Activated CD4-positive, alpha-beta memory T cell treated with anti-CD3 and anti-CD28 coated beads for 36 hours (primary cell): ENCODE measurements at regions of chr10 and their contacts with region 1.

Region 1: DNA sequence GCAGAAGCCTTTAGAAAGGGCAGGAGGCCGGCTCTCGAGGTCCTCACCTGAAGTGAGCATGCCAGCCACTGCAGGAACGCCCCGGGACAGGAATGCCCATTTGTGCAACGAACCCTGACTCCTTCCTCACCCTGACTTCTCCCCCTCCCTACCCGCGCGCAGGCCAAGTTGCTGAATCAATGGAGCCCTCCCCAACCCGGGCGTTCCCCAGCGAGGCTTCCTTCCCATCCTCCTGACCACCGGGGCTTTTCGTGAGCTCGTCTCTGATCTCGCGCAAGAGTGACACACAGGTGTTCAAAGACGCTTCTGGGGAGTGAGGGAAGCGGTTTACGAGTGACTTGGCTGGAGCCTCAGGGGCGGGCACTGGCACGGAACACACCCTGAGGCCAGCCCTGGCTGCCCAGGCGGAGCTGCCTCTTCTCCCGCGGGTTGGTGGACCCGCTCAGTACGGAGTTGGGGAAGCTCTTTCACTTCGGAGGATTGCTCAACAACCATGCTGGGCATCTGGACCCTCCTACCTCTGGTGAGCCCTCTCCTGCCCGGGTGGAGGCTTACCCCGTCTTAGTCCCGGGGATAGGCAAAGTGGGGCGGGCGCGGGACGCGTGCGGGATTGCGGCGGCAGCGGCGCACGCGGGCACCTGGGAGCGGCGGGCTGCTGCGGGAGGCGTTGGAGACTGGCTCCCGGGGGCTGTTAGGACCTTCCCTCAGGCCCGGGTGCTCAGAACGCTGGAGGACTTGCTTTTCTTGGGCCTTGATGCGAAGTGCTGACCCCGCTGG is at the start of gene FAS:
- DNase-seq: peak; percentile 94
- H3K4me3 Mint-ChIP-seq: peak within 1 kb of the TSS; percentile 86
- H3K27ac Mint-ChIP-seq: peak within 1 kb of the TSS; percentile 96
- H3K4me1 Mint-ChIP-seq: peaks cover 65% of the 10 kb centered on the region
- H3K27me3 Mint-ChIP-seq: no peaks in the 10 kb centered on the region
- total RNA-seq, gene FAS: 62.2 to 63.5 TPM

Region 2: DNA sequence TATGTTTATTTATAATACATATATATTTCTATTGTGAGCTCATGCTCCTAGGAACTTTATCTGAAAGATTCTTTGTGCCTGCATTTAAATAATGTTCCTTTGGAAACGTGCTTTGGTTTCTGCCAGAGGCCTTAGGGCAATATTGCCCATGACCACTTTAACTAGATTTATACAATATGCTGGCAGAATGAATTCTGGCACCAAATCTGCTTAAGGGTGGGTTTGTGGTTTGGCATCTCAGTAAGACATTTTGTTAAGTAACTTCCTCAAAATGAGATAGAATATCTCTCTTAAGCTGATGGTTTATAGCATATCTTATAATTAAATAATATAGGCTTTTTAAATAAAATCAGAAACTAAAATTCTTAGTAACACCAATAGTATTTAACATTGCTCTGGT is 660.4 kb before region 1 on chr10:
- CTCF ChIA-PET with region 1: no interaction called
- POLR2A ChIA-PET with region 1: no interaction called
- intact Hi-C with region 1: no loop called
- DNase-seq: no peak
- H3K4me3 Mint-ChIP-seq: no peak overlapping the region
- H3K27ac Mint-ChIP-seq: no peak overlapping the region
- H3K4me1 Mint-ChIP-seq: peaks cover 6% of the 10 kb centered on the region
- H3K27me3 Mint-ChIP-seq: no peaks in the 10 kb centered on the region

Region 3: DNA sequence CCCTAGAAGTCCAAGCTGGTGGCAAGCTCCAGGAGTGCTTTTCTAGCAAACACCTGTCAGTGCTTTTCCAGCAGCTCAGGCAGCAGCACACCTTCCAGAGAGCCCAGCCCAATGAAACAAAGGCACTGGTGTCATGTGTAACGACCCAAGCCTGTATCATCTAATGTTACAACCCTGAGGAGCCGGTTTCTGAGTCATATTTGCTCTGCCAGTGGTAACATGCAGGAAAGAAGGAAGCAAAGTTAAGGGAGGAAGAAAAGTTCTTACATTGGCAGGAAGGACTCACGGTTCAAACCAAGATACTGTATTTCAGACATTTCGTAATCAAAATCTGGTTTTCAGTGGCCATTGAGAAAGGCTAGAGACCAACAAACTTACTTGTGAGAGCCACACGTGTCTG is 138.9 kb before region 1 on chr10 and contains the start of gene ANKRD22:
- CTCF ChIA-PET with region 1: no interaction called
- POLR2A ChIA-PET with region 1: no interaction called
- intact Hi-C with region 1: loop called (anchors 2 kb)
- DNase-seq: no peak
- H3K4me3 Mint-ChIP-seq: no peak within 1 kb of the TSS
- H3K27ac Mint-ChIP-seq: no peak within 1 kb of the TSS
- H3K4me1 Mint-ChIP-seq: peaks cover 20% of the 10 kb centered on the region
- H3K27me3 Mint-ChIP-seq: peaks cover 6% of the 10 kb centered on the region
- total RNA-seq, gene ANKRD22: 0.12 to 0.24 TPM

Region 4: GRCh38 chr10:88960802-88961201 is 29.8 kb before region 1 on chr10:
- CTCF ChIA-PET with region 1: interaction called, 4 read pairs
- POLR2A ChIA-PET with region 1: interaction called, 20 read pairs
- intact Hi-C with region 1: loop called (anchors 1 kb)
- DNase-seq: peak; percentile 46
- H3K4me3 Mint-ChIP-seq: no peak overlapping the region
- H3K27ac Mint-ChIP-seq: peak overlapping the region; percentile 73
- H3K4me1 Mint-ChIP-seq: peaks cover 29% of the 10 kb centered on the region
- H3K27me3 Mint-ChIP-seq: no peaks in the 10 kb centered on the region

Region 5: DNA sequence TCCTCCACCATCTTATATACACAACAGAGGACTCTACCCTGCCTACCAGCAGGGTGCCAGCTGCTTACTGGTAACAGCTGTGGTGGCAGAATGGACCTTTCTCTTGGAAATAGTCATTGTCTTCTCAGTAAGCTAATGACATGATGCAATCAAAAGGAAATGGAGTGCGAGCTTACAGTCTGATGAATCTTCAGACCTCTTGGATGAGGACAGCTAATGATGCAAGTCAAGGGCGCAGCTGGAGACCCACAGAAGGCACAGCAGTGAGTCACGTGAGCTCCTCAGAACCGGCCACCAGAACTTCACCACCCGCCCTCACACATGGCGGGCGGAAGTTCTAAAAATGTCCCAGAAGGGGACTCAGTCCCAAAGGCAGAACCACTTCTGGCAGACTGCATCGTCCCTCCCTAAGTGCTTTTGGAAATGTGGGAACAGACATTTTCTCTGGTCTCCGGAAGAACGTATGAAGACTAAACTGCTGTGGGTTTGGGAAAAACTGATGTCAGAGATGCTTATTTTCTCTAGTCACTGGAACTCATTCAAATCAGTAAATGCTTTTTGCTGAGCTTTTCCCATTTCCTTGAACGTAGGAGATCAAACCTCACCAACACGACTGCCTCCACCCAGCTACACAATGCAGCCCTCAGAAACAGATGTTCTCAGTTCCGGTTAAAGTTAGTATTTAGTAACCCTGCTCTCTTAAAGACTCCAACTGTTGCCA is 96.4 kb after region 1 on chr10:
- CTCF ChIA-PET with region 1: no interaction called
- POLR2A ChIA-PET with region 1: no interaction called
- intact Hi-C with region 1: loop called (anchors 1 kb)
- DNase-seq: peak; percentile 50
- H3K4me3 Mint-ChIP-seq: no peak overlapping the region
- H3K27ac Mint-ChIP-seq: no peak overlapping the region
- H3K4me1 Mint-ChIP-seq: peaks cover 8% of the 10 kb centered on the region
- H3K27me3 Mint-ChIP-seq: no peaks in the 10 kb centered on the region

Region 6: DNA sequence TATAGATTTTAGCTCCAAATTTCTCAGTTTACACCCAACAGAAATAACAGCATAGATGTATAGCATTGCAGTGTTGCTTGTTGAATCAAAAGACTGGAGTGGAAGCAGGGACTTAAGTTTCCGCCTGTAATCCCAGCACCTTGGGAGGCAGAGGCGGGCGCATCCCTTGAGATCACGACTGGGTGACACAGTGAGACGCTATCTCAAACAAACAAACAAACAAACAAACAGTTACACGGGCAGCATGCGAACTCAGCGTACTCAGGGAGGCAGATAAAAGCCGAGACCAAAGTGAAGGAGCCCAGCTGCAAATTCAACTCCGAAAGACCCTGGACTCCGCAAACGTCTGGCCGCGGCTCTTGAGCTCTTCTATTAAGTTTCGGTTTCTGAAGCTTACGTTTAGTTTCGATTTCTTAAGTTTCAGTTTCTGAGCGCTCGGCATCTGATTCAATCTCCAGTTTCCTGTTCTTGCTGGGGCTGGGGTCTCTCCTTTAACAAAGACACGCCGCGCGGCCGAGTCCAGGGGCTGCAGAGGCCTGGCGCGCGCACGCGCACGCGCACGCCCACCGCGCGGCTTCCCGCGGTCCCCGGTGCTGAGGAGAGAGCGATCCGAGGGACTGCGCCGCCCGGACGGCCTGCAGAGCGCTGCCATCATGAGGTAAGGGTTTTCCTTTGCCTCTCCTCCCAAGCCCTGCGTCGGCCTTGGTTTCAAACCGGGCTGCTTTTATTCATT is 423.7 kb after region 1 on chr10 and contains the start of gene IFIT5:
- CTCF ChIA-PET with region 1: no interaction called
- POLR2A ChIA-PET with region 1: no interaction called
- intact Hi-C with region 1: loop called (anchors 10 kb)
- DNase-seq: peak; percentile 75
- H3K4me3 Mint-ChIP-seq: peak within 1 kb of the TSS; percentile 78
- H3K27ac Mint-ChIP-seq: peak within 1 kb of the TSS; percentile 94
- H3K4me1 Mint-ChIP-seq: peaks cover 48% of the 10 kb centered on the region
- H3K27me3 Mint-ChIP-seq: no peaks in the 10 kb centered on the region
- total RNA-seq, gene IFIT5: 10.1 to 10.9 TPM